Heart left ventricle (tissue), 16 donors: ENCODE measurements at regions of chr14 and their contacts with region 1.

Region 1: DNA sequence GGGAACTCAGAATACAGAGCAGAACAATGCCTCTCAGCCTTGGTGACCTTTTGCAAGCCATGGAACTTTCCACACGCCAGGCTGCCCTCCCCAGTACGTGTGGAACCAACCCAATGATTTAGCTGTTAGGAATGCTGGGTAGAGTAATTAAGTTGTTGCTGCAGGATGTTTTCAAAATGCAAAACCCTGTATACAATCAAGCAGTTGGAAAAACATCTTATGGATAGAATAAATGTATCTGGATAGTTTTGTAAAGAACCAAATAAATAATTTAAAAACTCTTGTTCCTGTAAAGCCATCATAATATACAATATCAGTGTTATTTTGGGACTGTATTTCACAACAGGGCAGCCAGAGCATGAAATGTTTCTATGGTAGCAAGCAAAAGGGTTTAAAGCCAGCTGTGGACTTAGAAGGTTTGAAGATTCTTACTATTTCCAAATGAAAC is 19.4 kb downstream of the PPP1R36 start:
- DNase-seq: peak in 4 of 5 donors; percentile 51 to 84 (median 62)
- ATAC-seq: peak; percentile 91 to 97 (median 96)
- H3K4me3 ChIP-seq: no peak overlapping the region
- H3K27ac ChIP-seq: peak overlapping the region; percentile 26 to 78 (median 65)
- H3K4me1 ChIP-seq: peaks cover 0 to 40% (median 18%) of the 10 kb centered on the region in 12 donors
- H3K27me3 ChIP-seq: no peaks in the 10 kb centered on the region
- CTCF ChIP-seq: no peak
- POLR2A ChIP-seq: no peak

Region 2: DNA sequence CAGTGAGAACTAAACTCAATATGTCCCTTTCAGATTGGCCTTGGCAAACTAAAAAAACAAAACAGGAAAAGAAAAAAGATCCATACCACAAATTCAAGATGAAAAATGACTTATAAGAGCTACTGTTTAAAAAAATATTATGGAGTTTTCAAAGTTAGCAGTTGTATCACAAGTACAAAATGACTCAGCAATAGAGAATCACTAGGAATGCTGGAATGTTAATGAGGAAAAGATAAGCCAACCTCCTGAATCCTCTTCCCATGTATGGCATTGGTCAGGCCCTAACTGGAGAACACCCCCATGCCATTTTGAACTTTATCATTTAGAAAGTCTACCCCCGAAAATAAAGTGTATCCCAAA is 42.8 kb after region 1 on chr14:
- intact Hi-C with region 1: loop called in 2 of 10 experiments (anchors 5 to 10 kb)
- DNase-seq: no peak
- ATAC-seq: peak in 1 of 4 donors; percentile 75
- H3K4me3 ChIP-seq: no peak overlapping the region
- H3K27ac ChIP-seq: peak overlapping the region in 8 of 12 donors; percentile 18 to 64 (median 46)
- H3K4me1 ChIP-seq: peaks cover 0 to 24% (median 6%) of the 10 kb centered on the region in 12 donors
- H3K27me3 ChIP-seq: no peaks in the 10 kb centered on the region
- CTCF ChIP-seq: no peak
- POLR2A ChIP-seq: no peak

Region 3: GRCh38 chr14:64636208-64636979 is 67.2 kb after region 1 on chr14:
- intact Hi-C with region 1: loop called in 1 of 10 experiments (anchors 2 kb)
- DNase-seq: peak; percentile 59 to 77 (median 72)
- ATAC-seq: peak; percentile 82 to 91 (median 90)
- H3K4me3 ChIP-seq: no peak overlapping the region
- H3K27ac ChIP-seq: peak overlapping the region in 1 of 12 donors; percentile 33
- H3K4me1 ChIP-seq: peaks cover 0 to 9% (median 0%) of the 10 kb centered on the region in 12 donors
- H3K27me3 ChIP-seq: no peaks in the 10 kb centered on the region
- CTCF ChIP-seq: peak; percentile 84 to 97 (median 89)
- POLR2A ChIP-seq: no peak